Aorta (tissue), 5 donors: ENCODE measurements at regions of chr1 and their contacts with region 1.

Region 1: DNA sequence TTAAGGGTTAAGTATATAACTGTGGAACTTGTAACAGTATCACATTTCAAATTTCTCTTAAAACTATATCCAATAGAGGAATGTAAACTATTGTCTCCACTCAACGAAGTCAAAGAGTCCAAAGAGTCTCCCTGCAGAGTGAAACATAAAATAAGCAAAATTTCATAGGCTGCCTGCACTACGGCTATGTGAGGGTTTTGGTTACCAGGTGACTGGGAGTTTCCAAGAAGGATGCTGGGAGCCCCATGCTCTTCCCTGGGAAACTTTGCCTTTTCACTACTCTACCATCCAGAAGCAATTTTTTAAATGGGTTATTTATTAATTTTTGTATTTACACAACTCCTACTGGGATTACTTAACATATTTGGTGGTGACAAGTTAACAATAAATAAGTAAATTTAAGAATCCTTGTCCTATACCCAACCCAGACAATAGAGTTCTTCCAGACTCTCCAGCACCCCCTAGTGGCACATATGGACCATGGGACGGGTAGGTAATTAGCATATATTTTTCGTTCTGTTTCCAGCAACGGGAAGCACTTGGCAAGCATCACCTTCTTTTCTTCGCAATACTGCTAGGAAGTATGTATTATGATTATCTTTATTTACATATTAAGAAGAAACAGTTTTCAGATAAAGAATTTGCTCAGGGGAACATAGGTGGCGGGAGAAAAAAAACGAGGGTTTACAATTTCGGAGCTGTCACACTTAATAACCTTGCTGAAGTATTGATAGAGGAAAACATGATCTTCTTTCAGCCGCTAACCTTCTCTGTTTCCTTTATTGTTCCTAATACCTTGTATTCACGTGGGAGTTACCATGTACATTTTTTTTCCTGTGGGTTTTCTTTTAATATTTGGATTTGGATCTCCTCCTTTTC is 3.5 kb downstream of the FMO2 start:
- DNase-seq: no peak
- ATAC-seq: peak; percentile 64
- H3K4me3 ChIP-seq: peak overlapping the region; percentile 42 to 94
- H3K27ac ChIP-seq: no peak overlapping the region
- H3K4me1 ChIP-seq: peaks cover 2 to 4% of the 10 kb centered on the region in 2 donors
- H3K27me3 ChIP-seq: no peaks in the 10 kb centered on the region

Region 2: DNA sequence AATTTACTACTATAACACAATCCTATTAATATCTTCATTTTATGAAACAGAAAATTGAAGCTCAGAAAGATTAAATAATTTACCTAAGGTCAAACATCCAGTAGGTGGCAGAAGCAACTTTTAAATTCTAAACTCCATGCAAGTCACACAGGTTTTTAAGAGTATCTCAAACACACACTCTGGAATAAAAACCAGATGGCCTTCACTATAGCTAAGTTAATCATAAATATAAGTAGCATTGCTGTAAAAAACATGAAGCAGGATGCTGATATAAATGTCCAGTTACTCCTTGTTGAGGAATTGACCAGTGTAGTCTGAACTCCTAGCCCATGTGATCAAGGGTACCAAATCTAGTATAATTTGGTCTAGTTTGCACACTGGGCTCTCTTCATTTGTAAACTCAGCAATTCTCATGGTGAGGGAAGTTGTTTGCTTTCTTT is 107.3 kb before region 1 on chr1:
- intact Hi-C with region 1: loop called (anchors 2 kb)
- DNase-seq: no peak
- ATAC-seq: peak; percentile 81
- H3K4me3 ChIP-seq: peak overlapping the region in 1 of 2 donors; percentile 40
- H3K27ac ChIP-seq: peak overlapping the region; percentile 74 to 90
- H3K4me1 ChIP-seq: peaks cover 0 to 2% of the 10 kb centered on the region in 2 donors
- H3K27me3 ChIP-seq: no peaks in the 10 kb centered on the region

Region 3: DNA sequence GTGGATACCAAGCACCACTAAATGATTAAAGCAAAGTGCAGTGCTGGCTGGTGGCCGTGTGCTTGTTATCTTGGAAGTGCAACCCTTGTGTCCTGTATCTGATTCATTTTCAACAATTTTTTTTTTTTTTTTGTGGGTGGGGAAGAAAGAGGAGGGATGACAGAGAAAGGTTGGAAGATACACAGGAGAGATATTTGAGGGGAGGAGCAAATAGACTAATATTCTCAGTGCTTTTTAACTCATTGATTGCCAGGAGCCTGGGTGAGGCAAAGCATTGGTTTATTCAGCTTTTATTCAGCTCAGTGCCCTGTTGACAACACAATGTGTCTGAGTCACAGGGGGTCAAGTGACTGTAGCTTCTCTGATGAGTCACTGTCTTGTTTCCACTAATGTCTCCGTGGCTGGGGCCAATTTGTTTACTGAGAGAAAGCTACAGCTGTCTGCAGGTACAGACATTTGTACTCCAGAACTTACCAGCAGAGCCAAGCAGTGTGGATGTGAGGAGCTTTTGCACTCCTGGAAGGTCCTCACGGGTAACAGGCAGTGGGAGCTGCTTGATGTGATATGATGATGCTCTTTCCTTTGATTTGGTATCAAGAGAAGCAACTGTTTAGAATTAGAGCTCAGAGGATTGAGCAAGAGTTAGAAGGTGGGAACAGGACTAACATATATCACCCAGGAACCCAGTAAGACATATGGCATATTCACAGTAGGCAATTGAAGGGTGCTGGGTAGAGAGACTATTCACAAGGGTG is 629.1 kb after region 1 on chr1:
- intact Hi-C with region 1: no loop called
- DNase-seq: no peak
- ATAC-seq: no peak
- H3K4me3 ChIP-seq: no peak overlapping the region
- H3K27ac ChIP-seq: no peak overlapping the region
- H3K4me1 ChIP-seq: peaks cover 0 to 3% of the 10 kb centered on the region in 2 donors
- H3K27me3 ChIP-seq: no peaks in the 10 kb centered on the region